ENCODE measurements at regions of chr17 and their contacts with region 1.

Region 1: DNA sequence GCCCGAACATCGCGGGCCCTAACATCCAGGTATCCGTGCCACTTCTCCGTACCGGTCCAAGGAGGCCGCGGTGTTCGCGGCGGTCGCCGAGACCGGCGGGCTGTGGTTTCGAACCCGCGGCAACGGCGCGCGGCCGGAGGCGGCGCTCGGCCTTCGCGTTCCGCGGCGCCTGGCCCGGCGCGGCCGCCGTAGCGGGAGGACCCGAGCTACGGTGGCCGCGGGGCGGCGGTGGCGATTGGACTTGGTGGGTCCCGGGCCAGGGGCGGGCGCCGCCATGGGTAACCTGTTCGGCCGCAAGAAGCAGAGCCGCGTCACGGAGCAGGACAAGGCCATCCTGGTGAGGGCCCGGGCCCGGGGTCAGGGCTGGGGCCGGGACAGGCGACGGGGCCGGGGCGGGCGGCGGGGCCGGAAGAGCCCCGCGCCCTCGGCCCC is at the start of gene CHMP6:
- DNase-seq: peak; percentile 74
- ATAC-seq: peak; percentile 71
- H3K4me3 Mint-ChIP-seq: peak within 1 kb of the TSS; percentile 74
- H3K27ac Mint-ChIP-seq: peak within 1 kb of the TSS; percentile 76
- H3K4me1 Mint-ChIP-seq: peaks cover 32% of the 10 kb centered on the region
- H3K27me3 Mint-ChIP-seq: peaks cover 8% of the 10 kb centered on the region
- total RNA-seq, gene CHMP6: 29.8 to 34.6 TPM

Region 2: GRCh38 chr17:81002409-81003361 is 11.0 kb after region 1 on chr17:
- CTCF ChIA-PET with region 1: interaction called, 17 read pairs
- DNase-seq: no peak
- ATAC-seq: no peak
- H3K4me3 Mint-ChIP-seq: no peak overlapping the region
- H3K27ac Mint-ChIP-seq: no peak overlapping the region
- H3K4me1 Mint-ChIP-seq: peaks cover 16% of the 10 kb centered on the region
- H3K27me3 Mint-ChIP-seq: peaks cover 42% of the 10 kb centered on the region

Region 3: GRCh38 chr17:81018044-81018802 is 26.6 kb after region 1 on chr17:
- CTCF ChIA-PET with region 1: interaction called, 16 read pairs
- DNase-seq: peak; percentile 80
- ATAC-seq: peak; percentile 95
- H3K4me3 Mint-ChIP-seq: peak overlapping the region; percentile 65
- H3K27ac Mint-ChIP-seq: peak overlapping the region; percentile 90
- H3K4me1 Mint-ChIP-seq: peaks cover 33% of the 10 kb centered on the region
- H3K27me3 Mint-ChIP-seq: no peaks in the 10 kb centered on the region

Region 4: GRCh38 chr17:81094509-81095382 is 103.1 kb after region 1 on chr17:
- CTCF ChIA-PET with region 1: interaction called, 30 read pairs
- DNase-seq: peak; percentile 96
- ATAC-seq: peak; percentile 88
- H3K4me3 Mint-ChIP-seq: peak overlapping the region; percentile 44
- H3K27ac Mint-ChIP-seq: peak overlapping the region; percentile 82
- H3K4me1 Mint-ChIP-seq: peaks cover 42% of the 10 kb centered on the region
- H3K27me3 Mint-ChIP-seq: peaks cover 9% of the 10 kb centered on the region